ENCODE measurements at regions of chr6 and their contacts with region 1.

Region 1: GRCh38 chr6:24855395-24856245 is 56.9 kb upstream of the ARMH2 start:
- H3K4me3 ChIP-seq: no peak overlapping the region
- H3K27ac ChIP-seq: no peak overlapping the region
- H3K4me1 ChIP-seq: no peaks in the 10 kb centered on the region
- CTCF ChIP-seq: peak; percentile 67; the same call in 1 of the 2 replicates

Region 2: GRCh38 chr6:24666641-24667377 is 188.8 kb before region 1 on chr6 and contains the starts of genes ACOT13 and TDP2:
- CTCF ChIA-PET with region 1: no interaction called
- POLR2A ChIA-PET with region 1: no interaction called
- H3K4me3 ChIP-seq: peak within 1 kb of the TSS; percentile 93
- H3K27ac ChIP-seq: peak within 1 kb of the TSS; percentile 71
- H3K4me1 ChIP-seq: no peaks in the 10 kb centered on the region; the same call in 1 of the 2 replicates
- CTCF ChIP-seq: peak; percentile 69

Region 3: DNA sequence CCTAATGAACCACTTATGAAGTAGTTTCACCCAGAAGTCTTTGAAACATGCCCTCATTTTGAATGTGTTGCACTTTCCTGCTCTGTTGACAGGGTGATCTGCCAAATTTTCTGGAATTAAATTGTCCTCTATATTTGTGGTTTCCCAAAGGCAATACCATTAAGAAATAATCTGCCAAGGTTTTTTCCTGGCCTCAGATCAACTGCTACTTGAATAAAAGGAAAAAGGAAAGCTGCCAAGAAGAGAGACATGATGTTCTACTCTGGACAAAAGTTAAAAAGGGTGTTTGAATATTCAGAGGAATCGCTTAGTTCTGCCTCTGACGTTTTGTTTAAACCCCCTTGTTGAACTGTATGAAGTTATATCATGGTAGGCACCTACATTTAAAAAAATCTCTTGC is 19.5 kb before region 1 on chr6:
- CTCF ChIA-PET with region 1: interaction called, 18 read pairs
- POLR2A ChIA-PET with region 1: interaction called, 4 read pairs
- H3K4me3 ChIP-seq: no peak overlapping the region
- H3K27ac ChIP-seq: no peak overlapping the region
- H3K4me1 ChIP-seq: no peaks in the 10 kb centered on the region
- CTCF ChIP-seq: no peak

Region 4: DNA sequence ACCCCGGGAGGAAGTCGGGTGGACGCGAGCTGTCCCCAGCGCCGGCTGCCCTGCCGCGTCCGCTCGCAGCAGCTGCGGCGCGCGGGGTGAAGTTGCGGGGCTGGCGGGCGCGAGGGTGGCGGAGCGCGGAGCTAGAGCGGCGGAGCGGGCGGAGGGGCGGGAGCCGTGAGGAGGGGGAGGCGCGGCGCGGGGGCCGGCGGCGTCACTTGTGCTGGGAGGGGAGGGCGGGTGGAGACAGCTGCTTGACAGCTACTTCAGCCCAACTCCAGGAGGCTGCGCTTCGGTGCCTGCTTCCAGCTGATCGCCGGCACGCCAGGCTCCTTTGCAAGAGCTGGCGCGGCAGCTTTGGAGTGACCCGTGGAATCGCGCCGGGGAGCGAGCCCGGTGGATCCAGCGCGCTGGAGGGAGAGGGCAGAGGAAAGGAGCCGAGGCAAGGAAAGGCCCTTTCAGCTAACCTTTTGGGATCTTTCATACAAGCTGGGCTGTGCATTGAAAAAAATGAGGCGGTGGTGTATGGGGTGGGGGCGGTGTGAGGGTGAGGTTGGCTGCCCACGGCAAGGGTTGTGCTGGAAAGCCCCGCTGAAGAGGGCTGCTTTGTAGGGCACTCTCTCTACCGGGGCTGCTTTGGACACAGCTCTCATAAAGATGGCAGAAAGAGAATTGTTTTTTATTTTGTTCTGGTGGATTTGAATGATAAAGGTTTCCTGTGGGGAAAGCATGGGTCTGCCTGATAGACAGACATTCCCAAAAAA is 55.5 kb after region 1 on chr6:
- CTCF ChIA-PET with region 1: interaction called, 11 read pairs
- POLR2A ChIA-PET with region 1: no interaction called
- H3K4me3 ChIP-seq: peak overlapping the region; percentile 65
- H3K27ac ChIP-seq: no peak overlapping the region; the same call in 1 of the 2 replicates
- H3K4me1 ChIP-seq: peaks cover 17% of the 10 kb centered on the region
- CTCF ChIP-seq: no peak

Region 5: DNA sequence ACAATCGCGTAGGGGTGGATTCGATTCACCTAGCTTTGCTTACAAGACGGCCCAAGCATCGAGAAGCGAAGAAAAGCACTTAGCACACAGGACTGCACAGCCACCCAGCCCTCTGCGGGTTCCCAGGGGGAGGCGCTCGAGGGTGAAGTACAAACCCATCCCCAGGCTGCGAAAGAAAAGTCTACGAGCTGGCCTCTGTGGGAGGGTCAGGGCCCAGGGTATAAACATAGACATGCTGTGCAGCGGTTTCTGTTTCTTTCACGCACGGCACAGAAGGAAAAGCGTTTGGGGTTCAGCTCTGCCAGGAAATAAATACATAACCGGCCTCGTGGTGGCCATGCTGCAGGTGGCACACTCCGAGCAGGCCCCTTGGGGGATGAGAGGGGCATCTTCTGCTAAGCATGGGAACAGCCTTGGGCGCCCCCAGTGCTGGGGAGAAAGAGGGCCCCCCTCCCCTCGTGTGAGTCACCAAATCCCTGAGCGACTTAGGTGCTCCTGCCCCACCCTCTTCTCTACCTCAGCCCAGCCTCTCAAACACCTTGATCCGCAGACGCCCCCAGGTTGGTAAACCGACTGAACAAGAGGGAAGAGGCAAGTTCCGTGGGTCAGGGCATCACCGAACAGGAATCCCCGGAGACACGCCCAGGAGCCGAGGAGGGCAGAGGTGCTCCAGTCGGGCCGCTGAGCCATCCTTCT is 171.7 kb after region 1 on chr6:
- CTCF ChIA-PET with region 1: interaction called, 10 read pairs
- POLR2A ChIA-PET with region 1: no interaction called
- H3K4me3 ChIP-seq: no peak overlapping the region
- H3K27ac ChIP-seq: no peak overlapping the region
- H3K4me1 ChIP-seq: no peaks in the 10 kb centered on the region
- CTCF ChIP-seq: no peak

Region 6: DNA sequence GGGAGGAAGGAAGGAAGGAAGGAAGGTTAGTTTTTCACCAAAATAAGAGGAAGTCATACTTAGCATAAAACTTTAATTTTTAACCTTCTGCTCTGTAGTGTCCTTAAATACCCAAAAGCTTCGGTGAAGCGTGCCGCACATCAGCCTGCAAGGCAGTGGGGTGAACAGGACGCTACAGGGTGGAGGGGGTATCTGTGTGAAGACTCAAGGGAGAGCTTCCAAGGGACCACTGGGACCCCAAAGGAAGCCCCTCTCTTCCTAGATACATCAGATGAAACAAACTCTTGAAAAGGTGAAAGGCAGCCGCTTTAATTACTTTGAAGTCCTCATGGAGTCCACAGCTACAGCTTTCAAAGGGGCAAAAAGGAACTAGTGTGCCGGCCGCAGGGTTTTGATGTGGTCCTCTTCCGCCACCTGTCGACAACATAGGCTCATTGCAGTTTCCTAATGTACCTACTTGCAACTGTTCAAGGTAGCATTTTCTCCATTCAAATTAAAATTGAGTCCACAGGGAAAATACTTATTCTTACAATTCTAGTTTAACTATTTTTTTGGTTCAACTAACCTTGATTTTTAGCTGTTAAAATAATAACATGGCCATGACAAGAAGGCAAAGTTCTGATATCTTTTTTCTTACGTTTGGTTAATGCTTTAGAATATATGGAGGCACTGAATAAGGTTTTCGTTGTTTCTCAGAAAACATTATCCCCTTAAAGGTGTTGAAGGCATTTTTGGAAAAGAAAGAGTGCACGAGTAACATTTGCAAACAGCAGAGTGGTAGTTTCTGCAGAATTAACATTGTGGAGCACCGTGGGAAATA is 215.1 kb after region 1 on chr6:
- CTCF ChIA-PET with region 1: interaction called, 28 read pairs
- POLR2A ChIA-PET with region 1: no interaction called
- H3K4me3 ChIP-seq: no peak overlapping the region
- H3K27ac ChIP-seq: no peak overlapping the region
- H3K4me1 ChIP-seq: no peaks in the 10 kb centered on the region
- CTCF ChIP-seq: peak; percentile 61